HCT116 (cell line): ENCODE measurements at regions of chr14 and their contacts with region 1.

Region 1: GRCh38 chr14:65356327-65356852 is 56.1 kb upstream of the FUT8 start:
- DNase-seq: peak; percentile 98
- ATAC-seq: peak; percentile 94
- H3K4me3 ChIP-seq: peak overlapping the region; percentile 49 to 50
- H3K27ac ChIP-seq: peak overlapping the region; percentile 60
- H3K4me1 ChIP-seq: peaks cover 27 to 69% of the 10 kb centered on the region in 2 experiments
- H3K27me3 ChIP-seq: no peaks in the 10 kb centered on the region
- CTCF ChIP-seq: no peak
- POLR2A ChIP-seq: peak; percentile 55
- RAD21 ChIP-seq: peak; percentile 30; the same call in 1 of the 2 replicates

Region 2: DNA sequence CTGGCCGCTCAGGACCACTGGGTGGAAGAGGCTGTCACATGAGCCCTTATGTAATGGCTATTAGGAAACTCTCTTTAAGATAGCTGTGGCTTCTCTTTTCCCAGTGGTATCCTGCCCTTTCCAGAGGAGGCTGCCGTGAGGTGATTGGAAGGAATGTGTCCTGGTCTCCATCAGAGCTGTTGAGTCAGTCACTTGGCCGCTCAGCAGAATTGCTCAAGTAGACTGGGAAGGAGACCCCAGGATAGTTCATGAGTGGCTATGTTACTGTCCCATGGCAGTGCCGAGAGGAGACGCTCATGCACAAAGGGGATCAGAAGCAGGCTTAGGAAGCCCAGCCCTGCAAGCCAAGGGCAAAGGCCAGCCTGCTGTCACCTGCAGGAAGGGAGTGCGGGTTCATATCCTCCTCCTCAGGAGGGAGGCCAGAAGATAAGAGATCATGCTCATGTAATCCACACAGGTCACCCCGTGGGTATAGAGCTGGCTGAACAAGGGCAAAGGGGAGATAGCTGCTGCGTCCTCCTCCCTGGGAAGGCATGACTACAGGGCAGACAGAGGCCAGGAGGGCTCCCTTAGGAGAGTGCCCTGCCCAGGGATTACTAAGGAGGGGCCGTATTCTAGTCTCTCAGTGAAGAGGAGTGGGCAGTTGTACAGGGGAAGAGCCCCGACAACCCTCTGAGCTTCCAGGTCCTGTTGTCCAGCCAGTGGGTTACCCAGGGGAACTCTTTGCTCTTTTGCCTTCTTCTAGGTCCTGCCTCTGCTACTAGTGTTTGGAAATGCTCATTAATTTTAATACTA is 117.0 kb before region 1 on chr14:
- CTCF ChIA-PET with region 1: no interaction called
- POLR2A ChIA-PET with region 1: interaction called, 3 read pairs
- RAD21 ChIA-PET with region 1: no interaction called
- intact Hi-C with region 1: loop called (anchors 5 kb)
- DNase-seq: no peak
- ATAC-seq: peak; percentile 32
- H3K4me3 ChIP-seq: peak overlapping the region; percentile 44 to 49
- H3K27ac ChIP-seq: peak overlapping the region; percentile 41
- H3K4me1 ChIP-seq: peaks cover 33 to 59% of the 10 kb centered on the region in 2 experiments
- H3K27me3 ChIP-seq: no peaks in the 10 kb centered on the region
- CTCF ChIP-seq: no peak
- POLR2A ChIP-seq: no peak
- RAD21 ChIP-seq: no peak

Region 3: GRCh38 chr14:65255536-65256461 is 100.6 kb before region 1 on chr14:
- CTCF ChIA-PET with region 1: no interaction called
- POLR2A ChIA-PET with region 1: no interaction called
- RAD21 ChIA-PET with region 1: no interaction called
- intact Hi-C with region 1: loop called (anchors 5 kb)
- DNase-seq: peak; percentile 78
- ATAC-seq: peak; percentile 84
- H3K4me3 ChIP-seq: peak overlapping the region in 1 of 2 experiments; percentile 42; a peak in 3 of 4 replicates
- H3K27ac ChIP-seq: peak overlapping the region; percentile 96
- H3K4me1 ChIP-seq: peaks cover 46 to 68% of the 10 kb centered on the region in 2 experiments
- H3K27me3 ChIP-seq: no peaks in the 10 kb centered on the region
- CTCF ChIP-seq: peak in 2 of 3 experiments; percentile 4 to 11; a peak in 1 of 6 replicates
- POLR2A ChIP-seq: no peak
- RAD21 ChIP-seq: peak; percentile 45

Region 4: GRCh38 chr14:65287264-65288131 is 68.9 kb before region 1 on chr14:
- CTCF ChIA-PET with region 1: interaction called, 3 read pairs
- POLR2A ChIA-PET with region 1: no interaction called
- RAD21 ChIA-PET with region 1: no interaction called
- intact Hi-C with region 1: loop called (anchors 5 kb)
- DNase-seq: no peak
- ATAC-seq: no peak
- H3K4me3 ChIP-seq: no peak overlapping the region
- H3K27ac ChIP-seq: no peak overlapping the region
- H3K4me1 ChIP-seq: peaks cover 6 to 43% of the 10 kb centered on the region in 2 experiments
- H3K27me3 ChIP-seq: no peaks in the 10 kb centered on the region
- CTCF ChIP-seq: no peak
- POLR2A ChIP-seq: no peak
- RAD21 ChIP-seq: no peak